ENCODE measurements at regions of chr12 and their contacts with region 1.

Region 1: DNA sequence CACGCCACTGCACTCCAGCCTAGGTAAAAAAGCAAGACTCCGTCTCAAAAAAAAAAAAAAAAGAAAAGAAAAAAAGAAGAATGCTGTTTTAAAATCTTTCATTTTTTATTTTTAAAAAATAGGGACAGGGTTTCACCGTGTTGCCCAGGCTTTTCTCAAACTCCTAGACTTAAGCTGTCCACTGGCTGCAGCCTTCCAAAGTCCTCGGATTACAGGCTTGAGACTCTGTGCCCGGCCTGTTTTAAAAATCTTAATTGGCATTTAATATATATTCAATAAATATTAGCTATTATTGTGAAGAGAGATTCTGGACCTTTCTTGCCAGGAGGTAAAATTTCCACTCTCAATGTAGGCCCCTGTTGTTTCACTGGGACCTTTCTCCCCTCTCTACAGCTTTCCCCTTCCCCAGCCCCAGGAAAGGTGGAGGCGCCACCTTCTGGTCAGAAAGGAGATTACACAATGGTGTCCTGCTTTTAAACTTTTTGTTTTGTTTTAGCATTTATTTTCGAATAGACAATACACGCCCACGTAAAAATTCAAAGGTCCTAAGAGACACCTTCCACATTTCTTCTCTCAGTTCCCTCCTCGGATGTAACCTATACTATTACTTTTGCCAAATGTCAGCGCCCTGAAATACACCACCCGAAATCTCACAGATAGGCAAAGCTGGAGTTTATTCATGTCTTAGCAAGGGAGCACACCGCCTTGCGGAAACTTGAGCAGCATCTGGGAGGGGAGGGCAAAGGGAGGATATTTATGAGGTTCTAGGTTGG is 23.8 kb upstream of the PHC1 start:
- DNase-seq: peak; percentile 58 to 74 (median 66)
- ATAC-seq: peak; percentile 82
- H3K4me3 ChIP-seq: peak overlapping the region; percentile 41
- H3K27ac ChIP-seq: peak overlapping the region; percentile 55; the same call in 1 of the 3 replicates
- H3K4me1 ChIP-seq: peaks cover 11 to 18% of the 10 kb centered on the region in 2 experiments; a peak in 4 of 5 replicates
- H3K27me3 ChIP-seq: no peaks in the 10 kb centered on the region
- CTCF ChIP-seq: peak; percentile 59 to 79 (median 73)
- EP300 ChIP-seq: no peak
- POLR2A ChIP-seq: no peak
- RAD21 ChIP-seq: peak; percentile 75 to 81

Region 2: GRCh38 chr12:8681041-8681902 is 209.2 kb before region 1 on chr12:
- CTCF ChIA-PET with region 1: interaction called, 10 read pairs
- POLR2A ChIA-PET with region 1: no interaction called
- in situ Hi-C with region 1: no loop called
- intact Hi-C with region 1: loop called (anchors 2 kb)
- DNase-seq: no peak
- ATAC-seq: no peak
- H3K4me3 ChIP-seq: no peak overlapping the region
- H3K27ac ChIP-seq: no peak overlapping the region
- H3K4me1 ChIP-seq: no peaks in the 10 kb centered on the region; a peak in 2 of 5 replicates
- H3K27me3 ChIP-seq: no peaks in the 10 kb centered on the region; a peak in 2 of 5 replicates
- CTCF ChIP-seq: no peak
- EP300 ChIP-seq: no peak
- POLR2A ChIP-seq: no peak
- RAD21 ChIP-seq: no peak

Region 3: GRCh38 chr12:8687846-8688601 is 202.5 kb before region 1 on chr12:
- CTCF ChIA-PET with region 1: no interaction called
- POLR2A ChIA-PET with region 1: no interaction called
- in situ Hi-C with region 1: no loop called
- intact Hi-C with region 1: loop called (anchors 2 kb)
- DNase-seq: peak in 1 of 4 experiments; percentile 25
- ATAC-seq: peak; percentile 51
- H3K4me3 ChIP-seq: no peak overlapping the region
- H3K27ac ChIP-seq: no peak overlapping the region
- H3K4me1 ChIP-seq: peaks cover 0 to 10% of the 10 kb centered on the region in 2 experiments; a peak in 3 of 5 replicates
- H3K27me3 ChIP-seq: no peaks in the 10 kb centered on the region
- CTCF ChIP-seq: no peak
- EP300 ChIP-seq: no peak
- POLR2A ChIP-seq: no peak
- RAD21 ChIP-seq: no peak

Region 4: DNA sequence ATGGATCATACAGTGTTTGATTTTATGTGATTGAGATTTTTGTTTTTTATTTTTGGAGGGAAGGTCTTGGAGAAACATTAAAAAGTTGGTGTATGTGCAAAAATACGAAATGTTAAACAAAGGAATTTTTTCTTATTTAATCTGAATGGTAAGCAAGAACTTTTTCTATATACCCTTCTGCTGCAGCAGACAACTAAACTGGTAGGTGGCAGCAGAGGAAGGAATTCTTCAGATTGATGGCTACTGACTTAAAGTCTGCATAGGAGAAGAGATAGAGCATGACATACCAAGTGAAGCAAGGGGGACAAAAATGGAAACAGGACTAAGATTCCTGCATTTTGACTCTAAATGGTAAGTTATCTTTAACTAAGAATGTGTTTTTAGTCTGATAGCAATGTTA is 110.1 kb before region 1 on chr12:
- CTCF ChIA-PET with region 1: interaction called, 7 read pairs
- POLR2A ChIA-PET with region 1: no interaction called
- in situ Hi-C with region 1: no loop called
- intact Hi-C with region 1: loop called (anchors 2 kb)
- DNase-seq: peak; percentile 12 to 47 (median 22)
- ATAC-seq: peak; percentile 81
- H3K4me3 ChIP-seq: no peak overlapping the region
- H3K27ac ChIP-seq: no peak overlapping the region
- H3K4me1 ChIP-seq: peaks cover 0 to 3% of the 10 kb centered on the region in 2 experiments; a peak in 3 of 5 replicates
- H3K27me3 ChIP-seq: no peaks in the 10 kb centered on the region
- CTCF ChIP-seq: peak in 2 of 3 experiments; percentile 27 to 61; a peak in 2 of 6 replicates
- EP300 ChIP-seq: no peak
- POLR2A ChIP-seq: no peak
- RAD21 ChIP-seq: peak; percentile 57 to 58

Region 5: GRCh38 chr12:8796831-8797626 is 93.5 kb before region 1 on chr12:
- CTCF ChIA-PET with region 1: no interaction called
- POLR2A ChIA-PET with region 1: no interaction called
- in situ Hi-C with region 1: no loop called
- intact Hi-C with region 1: no loop called
- DNase-seq: no peak
- ATAC-seq: no peak
- H3K4me3 ChIP-seq: no peak overlapping the region
- H3K27ac ChIP-seq: no peak overlapping the region
- H3K4me1 ChIP-seq: no peaks in the 10 kb centered on the region
- H3K27me3 ChIP-seq: no peaks in the 10 kb centered on the region
- CTCF ChIP-seq: no peak
- EP300 ChIP-seq: no peak
- POLR2A ChIP-seq: no peak
- RAD21 ChIP-seq: no peak

Region 6: GRCh38 chr12:8828540-8829518 is 61.7 kb before region 1 on chr12:
- CTCF ChIA-PET with region 1: no interaction called
- POLR2A ChIA-PET with region 1: no interaction called
- in situ Hi-C with region 1: no loop called
- intact Hi-C with region 1: loop called (anchors 5 kb)
- DNase-seq: peak in 1 of 4 experiments; percentile 50
- ATAC-seq: peak; percentile 79
- H3K4me3 ChIP-seq: no peak overlapping the region
- H3K27ac ChIP-seq: peak overlapping the region; percentile 48; the same call in 1 of the 3 replicates
- H3K4me1 ChIP-seq: peaks cover 19 to 21% of the 10 kb centered on the region in 2 experiments; a peak in 4 of 5 replicates
- H3K27me3 ChIP-seq: no peaks in the 10 kb centered on the region
- CTCF ChIP-seq: no peak
- EP300 ChIP-seq: no peak
- POLR2A ChIP-seq: no peak
- RAD21 ChIP-seq: no peak

Measured in K562 (cell line).